Calu3 (cell line): ENCODE measurements at regions of chr7 and their contacts with region 1.

Region 1: DNA sequence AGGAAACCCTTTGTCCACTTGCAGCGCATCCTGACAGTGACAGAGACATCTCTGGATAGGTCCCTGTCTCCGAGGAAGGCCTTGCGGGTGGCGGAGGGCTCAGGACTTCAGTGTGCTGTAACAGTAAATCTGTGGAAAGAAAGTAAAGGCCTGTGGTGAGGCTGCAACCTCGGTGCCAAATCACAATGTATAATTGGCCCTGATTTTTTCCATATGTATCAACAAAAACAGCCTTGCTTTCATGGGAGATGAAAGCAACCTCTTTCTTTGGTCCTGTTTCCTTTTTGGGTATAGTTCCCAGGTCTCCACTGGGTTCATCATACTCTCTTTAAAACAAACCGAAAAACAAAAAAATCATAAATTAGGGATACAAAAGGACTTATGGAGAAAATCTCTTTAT is 110.9 kb upstream of the BMPER start:
- DNase-seq: no peak
- H3K4me3 Mint-ChIP-seq: no peak overlapping the region
- H3K27ac Mint-ChIP-seq: no peak overlapping the region
- H3K4me1 Mint-ChIP-seq: no peaks in the 10 kb centered on the region
- H3K27me3 Mint-ChIP-seq: peaks cover 27% of the 10 kb centered on the region
- CTCF ChIP-seq: no peak

Region 2: DNA sequence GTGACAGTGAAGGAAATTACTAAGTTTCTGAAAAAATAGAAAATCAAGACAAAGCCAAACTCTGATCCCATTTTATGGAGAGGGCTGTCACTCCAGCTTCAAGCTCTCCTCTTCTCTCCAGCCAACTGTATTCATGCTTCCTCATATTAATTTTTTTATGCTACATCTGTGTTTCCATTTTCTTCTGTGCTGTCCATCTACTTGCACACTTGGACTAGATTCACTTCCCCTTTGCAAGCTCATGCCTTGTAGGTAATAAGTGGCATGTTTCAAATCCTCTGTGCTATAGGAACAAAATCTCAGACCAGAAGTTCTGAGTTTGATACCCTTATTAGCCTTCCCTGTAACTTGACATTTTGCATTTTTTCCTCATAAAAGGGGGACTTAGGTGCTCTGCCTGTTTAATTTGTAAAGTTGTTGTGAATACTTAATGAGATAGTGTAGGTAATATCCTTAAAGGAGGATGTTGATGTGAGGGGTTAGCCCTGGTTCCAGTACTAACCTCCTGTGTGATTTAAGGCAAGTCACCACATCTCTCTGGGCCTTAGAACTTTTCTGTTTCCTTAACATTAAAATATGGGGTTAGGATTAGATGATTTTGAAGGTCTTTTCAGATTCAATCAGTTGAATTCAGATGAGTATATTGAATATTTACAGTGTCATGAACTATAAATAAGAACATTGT is 306.3 kb before region 1 on chr7:
- CTCF ChIA-PET with region 1: interaction called, 11 read pairs
- intact Hi-C with region 1: no loop called
- DNase-seq: no peak
- H3K4me3 Mint-ChIP-seq: no peak overlapping the region
- H3K27ac Mint-ChIP-seq: no peak overlapping the region
- H3K4me1 Mint-ChIP-seq: no peaks in the 10 kb centered on the region
- H3K27me3 Mint-ChIP-seq: no peaks in the 10 kb centered on the region
- CTCF ChIP-seq: no peak

Region 3: DNA sequence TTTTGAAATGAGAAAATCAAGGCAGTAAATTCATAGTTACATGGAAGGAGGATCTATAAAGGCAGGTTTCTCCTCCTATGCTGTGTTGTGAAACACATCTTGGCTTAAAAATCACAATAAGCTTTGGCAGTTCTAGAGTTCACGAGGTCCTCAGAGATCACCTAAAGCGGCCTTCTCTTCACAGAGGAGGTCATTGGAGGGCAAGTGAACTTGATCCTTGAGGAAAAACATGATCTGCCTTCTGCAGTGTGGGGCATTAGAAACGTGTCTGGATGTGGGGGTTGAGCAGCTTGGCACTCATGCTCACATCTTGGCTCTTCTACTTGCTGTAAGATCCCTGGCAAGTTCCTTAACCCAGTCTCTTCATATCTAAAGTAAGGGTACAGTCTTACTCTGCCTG is 14.8 kb after region 1 on chr7:
- CTCF ChIA-PET with region 1: no interaction called
- intact Hi-C with region 1: no loop called
- DNase-seq: no peak
- H3K4me3 Mint-ChIP-seq: no peak overlapping the region
- H3K27ac Mint-ChIP-seq: no peak overlapping the region
- H3K4me1 Mint-ChIP-seq: no peaks in the 10 kb centered on the region
- H3K27me3 Mint-ChIP-seq: peaks cover 13% of the 10 kb centered on the region
- CTCF ChIP-seq: no peak

Region 4: GRCh38 chr7:33819658-33820057 is 25.2 kb after region 1 on chr7:
- CTCF ChIA-PET with region 1: no interaction called
- intact Hi-C with region 1: loop called (anchors 2 kb)
- DNase-seq: no peak
- H3K4me3 Mint-ChIP-seq: no peak overlapping the region
- H3K27ac Mint-ChIP-seq: no peak overlapping the region
- H3K4me1 Mint-ChIP-seq: no peaks in the 10 kb centered on the region
- H3K27me3 Mint-ChIP-seq: peaks cover 70% of the 10 kb centered on the region
- CTCF ChIP-seq: no peak

Region 5: GRCh38 chr7:33836786-33837355 is 42.5 kb after region 1 on chr7:
- CTCF ChIA-PET with region 1: no interaction called
- intact Hi-C with region 1: no loop called
- DNase-seq: no peak
- H3K4me3 Mint-ChIP-seq: no peak overlapping the region
- H3K27ac Mint-ChIP-seq: no peak overlapping the region
- H3K4me1 Mint-ChIP-seq: no peaks in the 10 kb centered on the region
- H3K27me3 Mint-ChIP-seq: peaks cover 19% of the 10 kb centered on the region
- CTCF ChIP-seq: no peak

Region 6: GRCh38 chr7:33868159-33868558 is 73.7 kb after region 1 on chr7:
- CTCF ChIA-PET with region 1: no interaction called
- intact Hi-C with region 1: no loop called
- DNase-seq: no peak
- H3K4me3 Mint-ChIP-seq: no peak overlapping the region
- H3K27ac Mint-ChIP-seq: no peak overlapping the region
- H3K4me1 Mint-ChIP-seq: no peaks in the 10 kb centered on the region
- H3K27me3 Mint-ChIP-seq: peaks cover 43% of the 10 kb centered on the region
- CTCF ChIP-seq: no peak